ENCODE measurements at regions of chr10 and their contacts with region 1.

Region 1: DNA sequence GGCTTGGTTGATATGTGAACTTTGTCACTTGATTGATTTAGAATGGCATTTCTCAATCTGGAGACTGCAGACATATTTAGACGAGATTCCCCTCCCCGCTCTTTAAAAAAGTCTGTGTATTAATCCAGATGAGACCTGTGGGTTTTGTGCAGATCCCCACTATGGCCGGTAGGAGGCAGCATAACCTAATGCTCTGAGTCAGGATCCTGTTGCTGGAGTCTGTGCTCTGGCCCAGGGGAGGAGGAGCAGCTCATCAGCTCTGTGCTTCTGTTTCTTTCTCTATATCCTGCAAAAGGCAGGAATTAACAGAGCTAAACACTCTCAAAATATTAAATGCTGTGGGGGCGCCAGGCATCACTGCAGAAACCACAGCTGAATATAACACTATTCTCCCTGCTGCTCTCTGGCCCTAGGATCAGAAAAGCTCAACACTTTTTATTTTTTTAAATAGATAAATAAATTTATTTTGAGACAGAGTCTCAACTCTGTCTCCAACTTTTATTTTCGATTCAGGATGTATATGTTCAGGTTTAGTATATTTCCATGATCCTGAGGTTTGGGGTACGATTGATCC is 23.9 kb upstream of the SEPHS1 start:
- DNase-seq: peak; percentile 79
- ATAC-seq: peak; percentile 97
- H3K4me3 ChIP-seq: no peak overlapping the region
- H3K27ac ChIP-seq: no peak overlapping the region
- H3K4me1 ChIP-seq: no peaks in the 10 kb centered on the region
- H3K27me3 ChIP-seq: no peaks in the 10 kb centered on the region
- CTCF ChIP-seq: peak; percentile 80

Region 2: GRCh38 chr10:13440185-13441061 is 68.4 kb after region 1 on chr10:
- CTCF ChIA-PET with region 1: interaction called, 16 read pairs
- POLR2A ChIA-PET with region 1: no interaction called
- intact Hi-C with region 1: loop called (anchors 1 kb)
- DNase-seq: peak; percentile 34
- ATAC-seq: peak; percentile 85
- H3K4me3 ChIP-seq: peak overlapping the region; percentile 58
- H3K27ac ChIP-seq: no peak overlapping the region
- H3K4me1 ChIP-seq: no peaks in the 10 kb centered on the region
- H3K27me3 ChIP-seq: no peaks in the 10 kb centered on the region
- CTCF ChIP-seq: peak; percentile 76

Measured in PC-3 (cell line).